Posterior cingulate gyrus (tissue), 11 donors: ENCODE measurements at regions of chr10 and their contacts with region 1.

Region 1: GRCh38 chr10:52644373-52645186 is 128.0 kb downstream of the MBL2 start:
- DNase-seq: peak in 5 of 10 donors; percentile 21 to 70 (median 42)

Region 2: GRCh38 chr10:52185256-52185655 is 459.3 kb before region 1 on chr10:
- intact Hi-C with region 1: no loop called
- DNase-seq: no peak

Region 3: DNA sequence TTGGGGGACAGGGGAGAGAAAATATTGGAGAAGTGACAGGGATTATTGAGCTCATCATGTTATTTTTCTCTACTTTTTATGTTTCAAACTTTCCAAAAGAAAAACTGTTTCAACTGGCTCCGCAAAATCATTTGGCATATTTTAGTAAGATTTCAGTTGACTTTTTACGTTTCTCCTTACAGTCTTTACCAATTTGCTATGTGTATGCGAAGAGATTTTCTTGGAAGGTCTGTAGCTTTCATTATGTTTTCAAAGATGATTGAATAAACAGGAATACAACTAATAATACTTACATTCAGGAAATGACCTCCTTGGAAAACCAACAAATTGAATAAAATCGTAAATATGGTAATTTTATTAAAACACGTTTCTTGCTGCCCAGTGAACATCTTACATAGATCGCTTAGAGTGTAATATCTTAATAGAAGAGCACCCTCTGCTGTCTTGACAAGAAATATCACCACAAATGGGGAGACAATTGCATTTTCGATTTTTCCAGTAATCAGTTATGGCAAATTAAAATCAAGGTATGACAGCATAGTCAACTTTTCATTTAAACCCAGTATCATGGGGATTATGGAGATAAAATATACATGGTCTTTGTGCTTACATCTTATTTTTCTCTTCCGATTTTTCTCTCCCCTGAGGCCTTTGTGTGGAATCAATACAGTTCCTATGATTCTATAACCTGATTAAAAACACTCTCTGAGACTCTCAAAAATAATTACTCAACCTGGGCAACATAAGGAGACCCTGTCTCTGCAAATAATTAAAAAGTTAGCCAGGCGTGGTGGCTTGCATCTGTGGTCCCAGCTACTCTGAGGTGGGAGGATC is 84.9 kb after region 1 on chr10:
- intact Hi-C with region 1: loop called (anchors 1 kb)
- DNase-seq: no peak